Activated naive CD4-positive, alpha-beta T cell treated with anti-CD3 and anti-CD28 coated beads, Interleukin-2, amount 10 ng/mL, durations not matched to agents 7 days and 5 days (primary cell): ENCODE measurements at regions of chr11 and their contacts with region 1.

Region 1: GRCh38 chr11:73980001-73980961 is 2.4 kb downstream of the UCP2 start:
- DNase-seq: peak; percentile 94
- H3K4me3 Mint-ChIP-seq: peak overlapping the region; percentile 93
- H3K27ac Mint-ChIP-seq: peak overlapping the region; percentile 97
- H3K4me1 Mint-ChIP-seq: peaks cover 68% of the 10 kb centered on the region
- H3K27me3 Mint-ChIP-seq: no peaks in the 10 kb centered on the region

Region 2: GRCh38 chr11:74170694-74171629 is 190.7 kb after region 1 on chr11 and contains the starts of genes C2CD3 and PPME1:
- CTCF ChIA-PET with region 1: interaction called, 13 read pairs
- DNase-seq: peak; percentile 99
- H3K4me3 Mint-ChIP-seq: no peak within 1 kb of the TSS
- H3K27ac Mint-ChIP-seq: no peak within 1 kb of the TSS
- H3K4me1 Mint-ChIP-seq: peaks cover 11% of the 10 kb centered on the region
- H3K27me3 Mint-ChIP-seq: no peaks in the 10 kb centered on the region